CD4-positive, alpha-beta memory T cell (primary cell): ENCODE measurements at regions of chrX and their contacts with region 1.

Region 1: DNA sequence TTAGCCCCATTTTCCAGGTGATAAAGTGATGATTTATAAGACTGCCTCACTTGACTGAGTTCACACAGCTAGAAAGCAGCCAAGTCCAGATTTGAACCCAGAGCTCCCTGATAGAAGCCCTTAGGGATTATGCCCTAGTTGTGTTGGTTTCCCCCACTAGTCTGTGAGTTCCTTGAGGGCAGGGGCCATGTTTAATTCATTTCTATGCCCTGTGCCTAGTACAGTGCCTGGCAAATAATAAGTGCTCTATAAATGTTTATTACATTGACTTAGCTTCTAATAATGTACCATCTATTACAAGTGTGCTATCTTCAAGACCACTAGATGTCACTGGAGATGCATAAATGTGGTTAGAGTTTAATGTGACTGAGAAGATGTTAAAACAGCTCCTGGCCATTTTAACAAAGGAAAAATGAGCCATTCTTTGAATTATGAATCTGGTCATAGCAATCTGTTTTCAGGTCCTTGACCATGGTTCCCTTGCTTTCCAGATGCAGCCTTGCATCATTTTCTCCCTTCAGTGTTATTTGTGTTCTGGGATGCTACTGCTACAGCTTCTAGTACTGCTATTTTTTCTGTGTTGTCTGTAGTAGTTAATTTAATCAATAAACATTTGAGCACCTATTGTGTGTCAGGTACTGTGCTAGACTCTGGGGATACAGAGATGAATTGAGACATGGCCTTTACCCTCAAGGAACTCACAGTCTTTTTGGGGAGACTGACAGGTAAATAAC is 43.2 kb downstream of the SLC9A6 start:
- DNase-seq: peak in 4 of 5 donors; percentile 44 to 52 (median 50)
- H3K4me3 ChIP-seq: no peak overlapping the region
- H3K4me3 Mint-ChIP-seq: no peak overlapping the region
- H3K27ac ChIP-seq: no peak overlapping the region
- H3K27ac Mint-ChIP-seq: peak overlapping the region in 1 of 7 donors; percentile 14
- H3K4me1 ChIP-seq: no peaks in the 10 kb centered on the region
- H3K4me1 Mint-ChIP-seq: peaks cover 0 to 5% (median 0%) of the 10 kb centered on the region in 4 donors
- H3K27me3 ChIP-seq: no peaks in the 10 kb centered on the region
- H3K27me3 Mint-ChIP-seq: no peaks in the 10 kb centered on the region

Region 2: GRCh38 chrX:136162831-136163570 is 134.6 kb after region 1 on chrX:
- CTCF ChIA-PET with region 1: interaction called, 75 read pairs
- POLR2A ChIA-PET with region 1: interaction called, 9 read pairs
- intact Hi-C with region 1: loop called (anchors 1 kb)
- DNase-seq: peak in 4 of 5 donors; percentile 26 to 41 (median 34)
- H3K4me3 ChIP-seq: no peak overlapping the region
- H3K4me3 Mint-ChIP-seq: peak overlapping the region in 1 of 8 donors; percentile 15
- H3K27ac ChIP-seq: no peak overlapping the region
- H3K27ac Mint-ChIP-seq: peak overlapping the region in 2 of 7 donors; percentile 26 to 37
- H3K4me1 ChIP-seq: no peaks in the 10 kb centered on the region
- H3K4me1 Mint-ChIP-seq: peaks cover 4 to 28% (median 6%) of the 10 kb centered on the region in 4 donors
- H3K27me3 ChIP-seq: no peaks in the 10 kb centered on the region
- H3K27me3 Mint-ChIP-seq: no peaks in the 10 kb centered on the region

Region 3: DNA sequence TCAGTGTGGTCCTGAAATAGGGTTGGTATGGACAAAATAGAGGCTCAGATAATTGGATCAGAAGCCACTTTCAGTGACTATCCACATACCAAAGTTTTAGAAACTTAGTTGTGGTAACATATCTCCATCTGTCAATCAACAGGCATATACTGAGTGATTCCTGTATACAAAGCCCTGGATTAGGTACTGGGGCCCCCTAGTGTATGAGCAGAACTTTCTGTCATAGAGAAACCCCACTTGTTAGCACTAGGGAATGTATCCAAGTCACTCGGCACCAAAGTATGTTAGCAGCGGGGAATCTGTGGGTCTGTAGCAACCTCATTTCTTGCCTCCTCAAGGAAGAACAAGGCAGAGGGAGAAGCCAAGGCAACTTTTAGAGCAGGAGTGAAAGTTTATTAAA is 172.0 kb after region 1 on chrX:
- CTCF ChIA-PET with region 1: interaction called, 16 read pairs
- POLR2A ChIA-PET with region 1: no interaction called
- intact Hi-C with region 1: loop called (anchors 1 kb)
- DNase-seq: peak in 1 of 5 donors; percentile 35
- H3K4me3 ChIP-seq: no peak overlapping the region
- H3K4me3 Mint-ChIP-seq: no peak overlapping the region
- H3K27ac ChIP-seq: no peak overlapping the region
- H3K27ac Mint-ChIP-seq: peak overlapping the region in 4 of 7 donors; percentile 24 to 85 (median 67)
- H3K4me1 ChIP-seq: peaks cover 37% of the 10 kb centered on the region
- H3K4me1 Mint-ChIP-seq: peaks cover 22 to 50% (median 31%) of the 10 kb centered on the region in 4 donors
- H3K27me3 ChIP-seq: no peaks in the 10 kb centered on the region
- H3K27me3 Mint-ChIP-seq: no peaks in the 10 kb centered on the region

Region 4: GRCh38 chrX:136209016-136209738 is 180.8 kb after region 1 on chrX:
- CTCF ChIA-PET with region 1: interaction called, 53 read pairs
- POLR2A ChIA-PET with region 1: interaction called, 9 read pairs
- intact Hi-C with region 1: loop called (anchors 1 kb)
- DNase-seq: peak; percentile 39 to 50 (median 42)
- H3K4me3 ChIP-seq: no peak overlapping the region
- H3K4me3 Mint-ChIP-seq: no peak overlapping the region
- H3K27ac ChIP-seq: no peak overlapping the region
- H3K27ac Mint-ChIP-seq: peak overlapping the region in 5 of 7 donors; percentile 19 to 72 (median 44)
- H3K4me1 ChIP-seq: peaks cover 25% of the 10 kb centered on the region
- H3K4me1 Mint-ChIP-seq: peaks cover 9 to 25% (median 19%) of the 10 kb centered on the region in 4 donors
- H3K27me3 ChIP-seq: no peaks in the 10 kb centered on the region
- H3K27me3 Mint-ChIP-seq: no peaks in the 10 kb centered on the region

Region 5: GRCh38 chrX:136268051-136269048 is 239.9 kb after region 1 on chrX:
- CTCF ChIA-PET with region 1: interaction called, 59 read pairs
- POLR2A ChIA-PET with region 1: no interaction called
- intact Hi-C with region 1: loop called (anchors 1 kb)
- DNase-seq: peak; percentile 34 to 54 (median 44)
- H3K4me3 ChIP-seq: no peak overlapping the region
- H3K4me3 Mint-ChIP-seq: no peak overlapping the region
- H3K27ac ChIP-seq: no peak overlapping the region
- H3K27ac Mint-ChIP-seq: no peak overlapping the region
- H3K4me1 ChIP-seq: no peaks in the 10 kb centered on the region
- H3K4me1 Mint-ChIP-seq: no peaks in the 10 kb centered on the region
- H3K27me3 ChIP-seq: no peaks in the 10 kb centered on the region
- H3K27me3 Mint-ChIP-seq: no peaks in the 10 kb centered on the region

Region 6: GRCh38 chrX:136387951-136388502 is 359.6 kb after region 1 on chrX:
- CTCF ChIA-PET with region 1: no interaction called
- POLR2A ChIA-PET with region 1: no interaction called
- intact Hi-C with region 1: no loop called
- DNase-seq: no peak
- H3K4me3 ChIP-seq: no peak overlapping the region
- H3K4me3 Mint-ChIP-seq: no peak overlapping the region
- H3K27ac ChIP-seq: no peak overlapping the region
- H3K27ac Mint-ChIP-seq: no peak overlapping the region
- H3K4me1 ChIP-seq: no peaks in the 10 kb centered on the region
- H3K4me1 Mint-ChIP-seq: no peaks in the 10 kb centered on the region
- H3K27me3 ChIP-seq: no peaks in the 10 kb centered on the region
- H3K27me3 Mint-ChIP-seq: peaks cover 6 to 12% of the 10 kb centered on the region in 2 donors

Region 7: DNA sequence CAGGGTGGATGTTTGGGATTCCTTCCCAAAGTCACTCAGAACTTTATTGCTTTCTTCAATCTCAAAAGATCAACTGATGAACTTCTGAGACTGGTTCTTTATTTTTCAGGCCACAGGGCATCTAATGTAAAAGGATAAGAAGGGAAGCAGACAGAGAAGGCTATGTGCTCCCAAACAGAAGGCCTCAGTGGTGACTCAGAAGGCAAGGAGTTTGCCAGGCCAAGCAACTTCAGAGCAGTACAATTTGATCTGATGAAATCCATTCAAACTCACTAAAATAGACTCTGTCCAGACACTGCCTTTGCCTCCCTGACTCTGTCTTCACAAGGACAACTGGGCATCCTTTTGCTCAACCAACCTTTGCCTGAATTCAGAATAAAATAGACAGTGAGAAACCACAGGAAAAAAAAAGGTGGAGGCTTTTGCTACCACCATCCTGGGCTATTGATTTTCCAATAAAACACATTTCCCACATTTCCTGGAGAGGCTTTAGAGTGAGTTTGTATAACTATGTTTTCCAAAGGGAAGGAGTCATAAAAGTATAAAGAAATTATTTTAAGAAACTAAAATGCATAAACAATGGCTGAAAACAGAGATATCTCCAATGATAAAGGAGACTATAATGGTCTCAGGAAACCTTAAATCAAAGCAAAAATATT is 697.2 kb after region 1 on chrX:
- CTCF ChIA-PET with region 1: no interaction called
- POLR2A ChIA-PET with region 1: no interaction called
- intact Hi-C with region 1: no loop called
- DNase-seq: no peak
- H3K4me3 ChIP-seq: no peak overlapping the region
- H3K4me3 Mint-ChIP-seq: no peak overlapping the region
- H3K27ac ChIP-seq: no peak overlapping the region
- H3K27ac Mint-ChIP-seq: peak overlapping the region in 2 of 7 donors; percentile 29 to 53
- H3K4me1 ChIP-seq: peaks cover 22% of the 10 kb centered on the region
- H3K4me1 Mint-ChIP-seq: peaks cover 10 to 18% (median 17%) of the 10 kb centered on the region in 4 donors
- H3K27me3 ChIP-seq: no peaks in the 10 kb centered on the region
- H3K27me3 Mint-ChIP-seq: no peaks in the 10 kb centered on the region

Region 8: DNA sequence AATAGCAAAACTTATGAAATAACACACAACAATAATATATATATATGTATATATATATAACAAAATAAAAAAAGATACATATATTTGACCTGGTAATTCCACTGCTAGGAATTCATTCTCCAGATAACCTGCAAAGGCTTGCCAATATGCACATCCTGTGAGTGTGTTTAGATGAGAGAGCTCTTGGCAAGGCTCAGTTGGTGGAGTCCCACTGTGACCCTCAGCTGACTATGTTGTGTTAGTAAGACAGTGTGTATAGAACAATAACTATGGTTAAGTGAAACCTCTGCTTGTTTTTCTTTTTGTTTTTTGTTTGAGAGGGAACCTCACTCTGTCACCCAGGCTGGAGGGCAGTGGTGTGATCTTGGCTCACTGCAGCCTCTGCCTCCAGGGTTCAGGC is 891.6 kb after region 1 on chrX:
- CTCF ChIA-PET with region 1: no interaction called
- POLR2A ChIA-PET with region 1: no interaction called
- intact Hi-C with region 1: loop called (anchors 2 kb)
- DNase-seq: no peak
- H3K4me3 ChIP-seq: no peak overlapping the region
- H3K4me3 Mint-ChIP-seq: no peak overlapping the region
- H3K27ac ChIP-seq: no peak overlapping the region
- H3K27ac Mint-ChIP-seq: no peak overlapping the region
- H3K4me1 ChIP-seq: peaks cover 3% of the 10 kb centered on the region
- H3K4me1 Mint-ChIP-seq: peaks cover 1 to 3% (median 2%) of the 10 kb centered on the region in 4 donors
- H3K27me3 ChIP-seq: no peaks in the 10 kb centered on the region
- H3K27me3 Mint-ChIP-seq: no peaks in the 10 kb centered on the region